Activated CD8-positive, alpha-beta T cell treated with anti-CD3 and anti-CD28 coated beads for 36 hours (primary cell): ENCODE measurements at regions of chr3 and their contacts with region 1.

Region 1: GRCh38 chr3:112979240-112979832 is 4.4 kb upstream of the CD200R1 start:
- DNase-seq: no peak
- ATAC-seq: peak; percentile 38
- H3K4me3 Mint-ChIP-seq: no peak overlapping the region
- H3K27ac Mint-ChIP-seq: no peak overlapping the region
- H3K4me1 Mint-ChIP-seq: peaks cover 60% of the 10 kb centered on the region
- H3K27me3 Mint-ChIP-seq: no peaks in the 10 kb centered on the region
- CTCF ChIP-seq: peak; percentile 88

Region 2: DNA sequence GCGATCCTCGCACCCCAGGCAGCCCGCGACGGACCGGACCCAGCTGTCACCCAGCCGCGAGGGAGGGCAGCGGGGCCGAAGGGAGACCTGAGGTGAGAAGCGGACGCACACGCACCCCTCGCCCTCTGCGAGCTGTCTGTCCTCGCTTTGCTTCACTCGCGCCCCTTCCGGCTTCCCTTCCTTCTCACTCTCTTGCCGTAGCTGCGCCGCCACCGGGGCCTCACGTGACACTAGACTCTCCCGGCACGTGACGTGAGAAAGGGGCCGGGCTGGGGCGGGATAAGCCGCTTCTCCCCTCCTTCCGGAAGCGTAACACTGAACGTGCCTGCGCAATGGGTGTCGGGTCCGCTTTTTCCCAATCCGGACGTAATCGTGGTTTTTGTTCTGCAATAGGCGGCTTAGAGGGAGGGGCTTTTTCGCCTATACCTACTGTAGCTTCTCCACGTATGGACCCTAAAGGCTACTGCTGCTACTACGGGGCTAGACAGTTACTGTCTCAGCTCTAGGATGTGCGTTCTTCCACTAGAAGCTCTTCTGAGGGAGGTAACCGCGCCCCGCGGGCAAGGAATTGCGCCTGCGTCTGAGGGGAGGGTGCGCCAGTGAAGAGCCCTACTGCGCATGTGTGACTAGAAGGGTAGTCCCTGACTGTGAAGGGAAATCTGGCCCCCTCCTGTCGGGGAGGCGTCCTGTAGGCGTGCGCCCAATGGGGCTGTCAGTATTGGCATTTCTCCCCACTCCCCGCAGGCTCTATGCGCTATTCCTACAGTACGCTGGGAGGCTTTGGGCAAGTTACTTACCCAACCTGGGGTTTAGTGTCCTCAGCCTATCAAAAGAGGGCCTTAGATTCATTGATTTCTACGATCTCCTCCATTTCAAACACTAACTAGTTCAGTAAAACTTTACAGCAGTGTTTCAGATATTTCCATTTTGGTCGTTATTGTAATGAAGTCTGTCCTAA is 417.3 kb before region 1 on chr3 and contains the starts of genes ATG3 and SLC35A5:
- CTCF ChIA-PET with region 1: no interaction called
- POLR2A ChIA-PET with region 1: interaction called, 3 read pairs
- intact Hi-C with region 1: loop called (anchors 10 kb)
- DNase-seq: peak; percentile 99
- ATAC-seq: peak; percentile 85
- H3K4me3 Mint-ChIP-seq: peak within 1 kb of the TSS; percentile 89
- H3K27ac Mint-ChIP-seq: peak within 1 kb of the TSS; percentile 97
- H3K4me1 Mint-ChIP-seq: peaks cover 45% of the 10 kb centered on the region
- H3K27me3 Mint-ChIP-seq: no peaks in the 10 kb centered on the region
- CTCF ChIP-seq: no peak
- total RNA-seq, gene ATG3: 56.5 to 58.4 TPM
- total RNA-seq, gene SLC35A5: 14.7 to 15.3 TPM

Region 3: DNA sequence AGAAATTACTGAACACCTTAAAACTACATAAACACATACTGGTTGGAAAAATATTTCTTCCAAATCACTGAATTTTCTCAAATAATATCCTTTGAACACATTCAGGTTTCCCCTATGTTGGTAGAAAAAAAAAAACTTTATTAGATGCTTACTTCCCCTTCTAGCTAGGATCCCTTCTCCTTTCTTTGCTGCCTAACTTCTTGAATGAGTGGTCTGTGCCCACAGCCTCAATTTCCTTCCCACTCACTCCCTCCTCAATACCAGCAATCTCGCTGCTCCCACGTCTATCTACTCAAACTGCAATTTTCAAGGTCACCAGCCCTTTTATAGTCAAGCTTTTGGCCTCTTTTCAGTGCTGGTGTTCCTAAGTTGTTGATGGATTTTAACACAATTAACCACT is 12.7 kb before region 1 on chr3:
- CTCF ChIA-PET with region 1: interaction called, 16 read pairs
- POLR2A ChIA-PET with region 1: interaction called, 3 read pairs
- intact Hi-C with region 1: no loop called
- DNase-seq: no peak
- ATAC-seq: no peak
- H3K4me3 Mint-ChIP-seq: no peak overlapping the region
- H3K27ac Mint-ChIP-seq: peak overlapping the region; percentile 1
- H3K4me1 Mint-ChIP-seq: peaks cover 47% of the 10 kb centered on the region
- H3K27me3 Mint-ChIP-seq: no peaks in the 10 kb centered on the region
- CTCF ChIP-seq: no peak

Region 4: GRCh38 chr3:113002679-113003078 is 23.3 kb after region 1 on chr3:
- CTCF ChIA-PET with region 1: interaction called, 14 read pairs
- POLR2A ChIA-PET with region 1: interaction called, 7 read pairs
- intact Hi-C with region 1: no loop called
- DNase-seq: peak; percentile 73
- ATAC-seq: peak; percentile 73
- H3K4me3 Mint-ChIP-seq: no peak overlapping the region
- H3K27ac Mint-ChIP-seq: peak overlapping the region; percentile 79
- H3K4me1 Mint-ChIP-seq: peaks cover 65% of the 10 kb centered on the region
- H3K27me3 Mint-ChIP-seq: no peaks in the 10 kb centered on the region
- CTCF ChIP-seq: no peak

Region 5: GRCh38 chr3:113043686-113044085 is 64.3 kb after region 1 on chr3:
- CTCF ChIA-PET with region 1: no interaction called
- POLR2A ChIA-PET with region 1: no interaction called
- intact Hi-C with region 1: no loop called
- DNase-seq: no peak
- ATAC-seq: no peak
- H3K4me3 Mint-ChIP-seq: no peak overlapping the region
- H3K27ac Mint-ChIP-seq: no peak overlapping the region
- H3K4me1 Mint-ChIP-seq: peaks cover 2% of the 10 kb centered on the region
- H3K27me3 Mint-ChIP-seq: no peaks in the 10 kb centered on the region
- CTCF ChIP-seq: no peak